ENCODE measurements at regions of chr3 and their contacts with region 1.

Region 1: DNA sequence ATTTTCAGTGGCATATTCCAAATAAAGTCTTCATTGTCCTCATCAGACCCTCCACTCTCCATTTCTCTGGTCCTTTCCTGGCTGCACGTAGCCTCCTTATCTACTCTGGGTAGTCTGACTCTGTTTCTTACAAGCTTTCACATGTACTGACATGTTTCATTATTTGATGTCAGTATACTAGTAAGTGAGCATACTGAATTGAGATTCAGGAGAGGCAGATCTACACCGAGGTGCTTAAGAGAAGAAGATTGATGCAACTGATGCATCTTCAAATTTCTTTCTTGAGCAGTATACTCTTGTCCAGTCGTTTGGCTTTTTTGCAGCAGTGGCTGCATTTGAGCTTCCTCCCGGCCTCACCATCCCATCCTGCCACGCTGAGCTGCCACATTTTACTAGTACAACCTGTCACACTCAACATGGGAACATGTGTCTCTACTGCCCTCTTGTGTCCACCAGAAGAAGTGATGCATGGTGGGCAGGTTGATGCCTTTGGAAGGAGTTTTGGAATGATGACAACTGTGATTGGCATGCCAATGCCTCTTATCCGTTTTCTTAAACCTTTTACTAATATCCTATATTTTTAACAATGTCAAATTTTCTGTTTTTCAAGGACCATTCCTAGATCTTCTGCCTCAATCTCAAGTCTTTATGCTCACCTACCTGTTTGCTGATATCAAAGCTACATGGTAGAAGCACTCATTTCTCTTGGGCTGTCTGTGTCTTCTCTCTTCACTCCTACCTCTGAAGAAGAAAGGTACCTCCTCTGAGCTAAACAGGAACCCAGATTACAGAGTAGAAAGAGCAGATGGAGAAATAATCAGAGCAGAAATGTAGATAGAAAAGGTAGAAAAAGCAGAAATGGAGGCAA is 38.7 kb downstream of the GUCA1C start:
- DNase-seq: peak; percentile 85
- ATAC-seq: peak; percentile 97
- H3K4me3 ChIP-seq: no peak overlapping the region
- H3K27ac ChIP-seq: no peak overlapping the region
- H3K4me1 ChIP-seq: no peaks in the 10 kb centered on the region
- H3K27me3 ChIP-seq: peaks cover 21% of the 10 kb centered on the region
- CTCF ChIP-seq: peak; percentile 92

Region 2: DNA sequence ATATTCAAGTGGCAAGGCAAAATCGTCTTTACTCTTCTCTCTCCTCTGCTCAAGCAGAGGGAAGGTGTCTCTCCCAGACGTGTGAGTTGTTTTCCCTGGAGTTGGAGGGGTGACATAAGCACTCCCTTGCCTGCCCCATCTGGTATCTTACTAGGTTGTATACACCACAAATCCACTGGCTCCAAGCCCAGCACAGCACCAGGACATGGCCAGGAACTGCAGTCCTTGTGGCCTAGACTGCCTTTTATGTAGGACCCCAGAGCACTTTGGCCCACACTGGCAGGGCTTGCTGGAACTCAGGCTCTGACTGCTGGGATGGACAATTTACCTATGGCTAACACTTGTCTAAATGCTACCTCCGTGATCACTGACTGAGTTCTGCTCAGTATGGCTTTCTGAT is 291.5 kb before region 1 on chr3:
- CTCF ChIA-PET with region 1: no interaction called
- POLR2A ChIA-PET with region 1: interaction called, 16 read pairs
- intact Hi-C with region 1: no loop called
- DNase-seq: no peak
- ATAC-seq: no peak
- H3K4me3 ChIP-seq: no peak overlapping the region
- H3K27ac ChIP-seq: no peak overlapping the region
- H3K4me1 ChIP-seq: no peaks in the 10 kb centered on the region
- H3K27me3 ChIP-seq: no peaks in the 10 kb centered on the region
- CTCF ChIP-seq: no peak

Region 3: DNA sequence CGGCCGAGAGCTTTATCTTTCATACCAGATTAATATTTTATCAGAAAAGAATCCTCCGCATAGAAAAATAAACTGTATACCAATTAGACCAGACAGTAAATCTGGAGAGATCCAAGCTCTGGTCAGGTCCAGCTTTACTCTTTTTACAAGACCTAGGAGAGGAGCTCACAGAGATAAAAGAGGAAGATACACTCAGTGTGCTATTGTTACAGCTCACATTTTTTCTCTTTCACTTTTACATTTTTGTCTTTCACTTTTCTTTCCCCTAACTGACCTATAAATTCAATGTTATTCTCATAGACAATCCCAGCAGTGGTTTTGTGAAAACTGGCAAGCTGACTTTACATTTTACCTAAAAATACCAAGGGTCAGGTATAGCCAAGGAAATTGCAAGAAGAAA is 17.1 kb before region 1 on chr3:
- CTCF ChIA-PET with region 1: no interaction called
- POLR2A ChIA-PET with region 1: no interaction called
- intact Hi-C with region 1: no loop called
- DNase-seq: no peak
- ATAC-seq: no peak
- H3K4me3 ChIP-seq: no peak overlapping the region
- H3K27ac ChIP-seq: no peak overlapping the region
- H3K4me1 ChIP-seq: no peaks in the 10 kb centered on the region
- H3K27me3 ChIP-seq: peaks cover 52% of the 10 kb centered on the region
- CTCF ChIP-seq: no peak

Region 4: DNA sequence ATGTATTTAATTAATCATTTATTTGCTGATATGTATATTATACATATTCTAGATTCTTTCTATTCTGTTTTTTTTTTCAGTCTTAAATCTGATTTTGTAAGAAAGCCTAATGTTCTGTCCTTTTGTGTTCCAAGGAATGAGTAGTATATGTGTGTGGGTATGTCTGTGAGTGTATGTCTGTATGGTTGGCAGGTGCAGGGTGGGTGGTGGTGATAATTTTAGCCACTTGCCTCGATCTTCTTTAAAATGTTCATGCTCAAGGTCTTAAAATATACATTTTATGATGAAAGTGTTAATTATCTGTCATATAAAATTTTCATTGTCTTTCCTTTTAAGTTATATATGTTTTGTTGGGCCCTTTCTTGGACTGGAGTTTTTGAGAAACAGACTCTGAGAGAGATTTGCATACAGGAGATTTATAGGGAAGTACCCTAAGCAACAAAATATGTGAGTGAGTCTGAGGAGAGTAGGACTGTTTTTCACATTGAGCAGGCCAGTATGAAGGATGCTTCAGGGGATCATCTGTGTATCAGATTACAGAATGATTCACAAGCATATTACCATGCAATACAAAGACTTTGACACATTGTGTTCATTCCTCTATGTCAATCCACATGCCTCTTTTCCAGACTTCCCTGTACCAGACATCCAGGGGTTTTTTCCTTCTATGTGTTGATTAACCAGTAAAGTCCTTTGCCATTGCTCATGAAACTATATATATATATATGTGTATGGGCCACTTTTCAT is 633.4 kb after region 1 on chr3:
- CTCF ChIA-PET with region 1: no interaction called
- POLR2A ChIA-PET with region 1: no interaction called
- intact Hi-C with region 1: no loop called
- DNase-seq: peak; percentile 28
- ATAC-seq: peak; percentile 57
- H3K4me3 ChIP-seq: no peak overlapping the region
- H3K27ac ChIP-seq: no peak overlapping the region
- H3K4me1 ChIP-seq: peaks cover 6% of the 10 kb centered on the region; the same call in 1 of the 2 replicates
- H3K27me3 ChIP-seq: no peaks in the 10 kb centered on the region
- CTCF ChIP-seq: no peak

Measured in PC-3 (cell line).